Ovary (tissue), 10 donors: ENCODE measurements at regions of chrX and their contacts with region 1.

Region 1: DNA sequence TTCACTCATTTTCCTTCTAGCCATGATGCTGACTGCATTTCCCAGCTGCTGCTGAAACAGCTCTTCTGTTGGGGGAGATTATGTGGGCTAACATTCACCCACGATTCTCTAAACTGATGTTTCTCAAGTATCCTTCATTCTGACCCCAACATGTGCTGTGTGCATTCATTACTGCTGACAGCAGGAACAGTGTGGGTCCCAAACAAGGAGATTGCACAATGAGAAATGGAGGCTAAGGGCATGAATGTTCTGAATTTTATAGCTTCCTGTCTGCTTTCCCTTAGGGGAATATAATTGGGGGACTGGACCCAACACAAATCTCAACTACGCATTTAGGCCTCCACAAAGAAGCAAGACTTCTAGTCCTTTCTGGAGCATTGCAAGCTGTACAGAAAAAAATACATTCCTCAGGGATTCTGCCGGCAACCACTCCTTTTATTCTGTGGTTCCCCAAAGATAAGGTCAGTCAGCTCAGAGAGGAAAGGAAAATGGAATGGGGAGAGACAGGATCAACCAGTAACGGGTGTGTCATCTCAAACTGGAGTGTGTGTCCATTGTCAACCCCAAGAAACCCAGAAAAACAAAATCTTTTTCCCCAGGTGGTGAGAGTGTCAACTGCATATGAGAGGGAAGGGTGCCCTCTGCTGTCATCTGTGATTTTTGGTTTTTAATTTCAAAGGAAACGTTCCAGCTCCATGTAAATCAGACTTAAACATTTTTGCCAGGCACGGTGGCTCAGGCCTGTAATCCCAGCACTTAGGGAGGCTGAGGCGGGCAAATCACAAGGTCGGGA is 81.5 kb upstream of the EGFL6 start:
- DNase-seq: peak; percentile 32 to 52 (median 34)
- H3K4me3 ChIP-seq: no peak overlapping the region
- H3K27ac ChIP-seq: peak overlapping the region in 1 of 2 donors; percentile 34
- H3K4me1 ChIP-seq: peaks cover 5% of the 10 kb centered on the region
- H3K27me3 ChIP-seq: no peaks in the 10 kb centered on the region
- CTCF ChIP-seq: peak in 2 of 3 donors; percentile 79 to 84
- EP300 ChIP-seq: no peak
- POLR2A ChIP-seq: no peak

Region 2: DNA sequence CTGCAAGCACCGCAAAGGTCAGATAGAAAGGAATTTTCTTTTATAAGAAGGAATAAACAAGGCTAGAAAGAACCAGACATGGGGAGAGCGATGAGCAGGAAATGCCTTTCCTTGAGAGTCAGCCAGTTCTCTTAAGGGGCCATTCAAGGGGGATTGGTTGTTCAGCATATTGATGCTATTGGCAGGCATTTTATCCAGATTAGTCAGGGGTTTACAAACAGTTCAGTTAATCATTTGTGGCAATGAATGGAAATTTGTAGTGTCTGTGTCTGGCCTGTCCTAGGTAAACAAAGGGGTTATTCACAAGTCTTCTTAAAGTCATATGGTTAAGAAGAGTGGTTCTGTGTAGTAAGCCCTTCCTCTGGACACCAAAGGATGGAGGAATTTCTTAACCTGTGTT is 1534.3 kb before region 1 on chrX:
- intact Hi-C with region 1: no loop called
- DNase-seq: no peak
- H3K4me3 ChIP-seq: no peak overlapping the region
- H3K27ac ChIP-seq: no peak overlapping the region
- H3K4me1 ChIP-seq: no peaks in the 10 kb centered on the region
- H3K27me3 ChIP-seq: no peaks in the 10 kb centered on the region
- CTCF ChIP-seq: no peak
- EP300 ChIP-seq: no peak
- POLR2A ChIP-seq: no peak

Region 3: GRCh38 chrX:12946838-12947544 is 540.9 kb before region 1 on chrX:
- intact Hi-C with region 1: loop called in 1 of 4 experiments (anchors 5 kb)
- DNase-seq: peak; percentile 52 to 75 (median 60)
- H3K4me3 ChIP-seq: no peak overlapping the region
- H3K27ac ChIP-seq: no peak overlapping the region
- H3K4me1 ChIP-seq: peaks cover 7% of the 10 kb centered on the region
- H3K27me3 ChIP-seq: no peaks in the 10 kb centered on the region
- CTCF ChIP-seq: peak in 2 of 3 donors; percentile 67 to 77
- EP300 ChIP-seq: no peak
- POLR2A ChIP-seq: no peak

Region 4: GRCh38 chrX:13000301-13000811 is 487.6 kb before region 1 on chrX:
- intact Hi-C with region 1: no loop called
- DNase-seq: no peak
- H3K4me3 ChIP-seq: no peak overlapping the region
- H3K27ac ChIP-seq: peak overlapping the region in 1 of 2 donors; percentile 20
- H3K4me1 ChIP-seq: peaks cover 3% of the 10 kb centered on the region
- H3K27me3 ChIP-seq: no peaks in the 10 kb centered on the region
- CTCF ChIP-seq: no peak
- EP300 ChIP-seq: no peak
- POLR2A ChIP-seq: no peak